ENCODE measurements at regions of chr6 and their contacts with region 1.

Region 1: GRCh38 chr6:142112451-142113061 is 20.2 kb upstream of the GJE1 start:
- DNase-seq: peak; percentile 76
- H3K4me3 ChIP-seq: no peak overlapping the region
- H3K27ac ChIP-seq: no peak overlapping the region
- H3K4me1 ChIP-seq: no peaks in the 10 kb centered on the region
- H3K27me3 ChIP-seq: no peaks in the 10 kb centered on the region
- CTCF ChIP-seq: peak; percentile 57
- POLR2A ChIP-seq: no peak

Region 2: DNA sequence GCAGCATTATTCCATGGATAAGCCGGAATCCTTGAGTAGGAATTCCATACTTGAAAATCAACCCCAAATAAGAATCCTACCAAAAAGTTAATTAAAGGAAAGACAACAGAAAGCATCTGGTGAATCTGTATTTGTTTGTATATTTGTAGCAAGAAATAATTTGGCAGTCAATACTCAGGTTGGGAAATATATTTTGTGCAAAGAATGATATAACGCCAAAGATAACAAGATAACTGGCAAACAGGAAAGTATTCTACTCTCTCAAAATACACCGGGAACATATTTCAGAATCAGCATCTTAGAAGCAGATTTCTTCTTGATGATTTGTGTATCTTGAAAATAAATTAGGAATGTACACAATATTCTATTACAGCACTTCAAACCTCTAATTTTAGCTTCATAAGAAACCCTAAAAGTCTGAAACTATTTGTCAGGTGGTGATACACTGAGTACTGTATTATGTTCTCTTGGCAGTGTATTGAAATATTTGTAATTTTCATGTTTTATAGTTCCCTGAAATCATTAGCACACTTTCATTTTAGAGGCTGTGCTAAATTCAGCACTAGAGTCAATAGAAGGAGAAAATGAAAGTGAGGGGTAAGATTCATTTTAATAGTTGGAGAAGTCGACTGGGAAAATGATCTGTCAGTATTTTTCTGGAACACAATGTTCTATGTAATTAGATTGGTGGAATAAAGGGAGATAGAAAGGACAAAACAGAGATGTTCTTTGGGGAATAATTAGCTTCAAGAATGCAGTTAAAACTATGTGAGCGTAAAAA is 859.5 kb before region 1 on chr6:
- CTCF ChIA-PET with region 1: no interaction called
- POLR2A ChIA-PET with region 1: no interaction called
- dilution Hi-C with region 1: no loop called
- intact Hi-C with region 1: loop called (anchors 5 kb)
- DNase-seq: peak; percentile 14
- H3K4me3 ChIP-seq: no peak overlapping the region
- H3K27ac ChIP-seq: no peak overlapping the region
- H3K4me1 ChIP-seq: no peaks in the 10 kb centered on the region
- H3K27me3 ChIP-seq: no peaks in the 10 kb centered on the region
- CTCF ChIP-seq: no peak
- POLR2A ChIP-seq: no peak

Region 3: DNA sequence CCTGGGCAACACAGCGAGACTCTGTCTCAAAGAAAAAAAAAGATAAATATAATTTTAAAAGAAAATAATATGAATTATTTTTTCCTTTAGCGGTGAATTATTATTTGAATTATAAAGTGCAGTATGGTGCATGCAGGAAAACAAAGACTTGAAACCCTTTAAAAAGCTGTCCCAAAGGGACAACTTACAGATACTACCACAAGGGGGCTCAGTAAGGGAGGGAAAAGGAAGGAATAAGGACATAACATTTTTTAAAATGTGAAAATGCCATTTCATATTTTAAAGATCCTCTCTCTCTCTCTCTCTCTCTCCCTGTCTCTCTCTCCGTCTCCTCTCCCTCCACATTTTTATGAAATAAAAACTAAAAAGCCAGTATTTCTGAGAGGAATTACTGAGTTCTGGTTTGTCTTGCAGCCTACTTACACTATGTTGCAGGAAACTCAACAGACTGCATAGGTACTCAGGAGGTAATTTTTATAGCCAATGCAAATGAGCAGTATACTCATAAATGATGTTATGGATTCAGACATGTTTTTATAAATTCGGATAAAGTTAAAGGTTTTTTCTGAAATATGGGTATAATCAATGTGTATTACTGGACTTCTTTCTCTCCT is 434.9 kb before region 1 on chr6:
- CTCF ChIA-PET with region 1: interaction called, 10 read pairs
- POLR2A ChIA-PET with region 1: no interaction called
- dilution Hi-C with region 1: no loop called
- intact Hi-C with region 1: loop called (anchors 1 kb)
- DNase-seq: peak; percentile 43
- H3K4me3 ChIP-seq: no peak overlapping the region
- H3K27ac ChIP-seq: no peak overlapping the region
- H3K4me1 ChIP-seq: no peaks in the 10 kb centered on the region
- H3K27me3 ChIP-seq: no peaks in the 10 kb centered on the region
- CTCF ChIP-seq: peak; percentile 46 to 57
- POLR2A ChIP-seq: no peak

Region 4: GRCh38 chr6:142035890-142036289 is 76.7 kb before region 1 on chr6:
- CTCF ChIA-PET with region 1: no interaction called
- POLR2A ChIA-PET with region 1: no interaction called
- dilution Hi-C with region 1: no loop called
- intact Hi-C with region 1: no loop called
- DNase-seq: no peak
- H3K4me3 ChIP-seq: no peak overlapping the region
- H3K27ac ChIP-seq: no peak overlapping the region
- H3K4me1 ChIP-seq: no peaks in the 10 kb centered on the region
- H3K27me3 ChIP-seq: no peaks in the 10 kb centered on the region
- CTCF ChIP-seq: no peak
- POLR2A ChIP-seq: no peak

Measured in endothelial cell of umbilical vein (primary cell).